A673 (cell line): ENCODE measurements at regions of chr6 and their contacts with region 1.

Region 1: DNA sequence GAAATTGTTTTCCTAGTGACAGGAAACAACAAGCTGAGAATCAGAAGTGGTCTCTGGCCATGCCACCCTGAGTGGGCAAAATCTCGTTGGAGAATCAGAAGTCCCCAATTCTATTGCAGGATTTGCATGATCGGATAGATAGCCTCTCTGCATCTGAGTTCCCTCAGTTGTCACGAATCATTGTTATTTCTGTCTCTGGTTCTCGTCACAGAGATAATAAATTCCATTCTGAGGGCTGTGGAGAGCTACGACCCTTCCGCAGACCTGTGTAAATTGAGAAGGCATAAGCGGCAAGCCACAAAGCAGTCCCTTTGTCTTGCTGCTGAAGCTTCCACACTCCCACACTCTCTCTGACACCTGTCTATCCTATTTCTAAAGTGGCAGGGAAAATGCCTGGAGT is 102.4 kb upstream of the CNR1 start:
- DNase-seq: no peak
- H3K4me3 ChIP-seq: no peak overlapping the region
- H3K27ac ChIP-seq: no peak overlapping the region
- H3K4me1 ChIP-seq: no peaks in the 10 kb centered on the region
- H3K27me3 ChIP-seq: peaks cover 3% of the 10 kb centered on the region
- CTCF ChIP-seq: no peak

Region 2: DNA sequence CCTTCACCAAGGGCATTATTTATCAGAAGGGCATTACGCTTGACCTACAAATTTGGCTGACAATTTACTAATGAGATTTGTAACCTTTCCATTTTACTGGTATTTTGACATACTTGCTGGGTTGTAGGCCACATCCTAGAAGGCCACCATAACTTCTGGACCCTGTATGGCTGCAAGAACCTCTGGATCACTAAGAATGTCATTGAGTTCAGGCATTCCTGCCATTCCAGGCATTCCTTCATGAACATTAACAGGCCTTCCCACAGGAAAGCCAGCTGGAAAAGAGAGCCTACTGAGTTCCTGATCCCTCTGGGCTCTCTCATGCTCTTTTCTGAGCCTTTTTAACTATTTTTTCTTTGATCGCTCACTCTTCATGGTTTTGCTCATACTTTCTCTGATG is 824.1 kb before region 1 on chr6:
- CTCF ChIA-PET with region 1: no interaction called
- POLR2A ChIA-PET with region 1: interaction called, 10 read pairs
- intact Hi-C with region 1: no loop called
- DNase-seq: no peak
- H3K4me3 ChIP-seq: no peak overlapping the region
- H3K27ac ChIP-seq: no peak overlapping the region
- H3K4me1 ChIP-seq: no peaks in the 10 kb centered on the region
- H3K27me3 ChIP-seq: peaks cover 11% of the 10 kb centered on the region
- CTCF ChIP-seq: no peak